K562 (cell line): ENCODE measurements at regions of chr11 and their contacts with region 1.

Region 1: DNA sequence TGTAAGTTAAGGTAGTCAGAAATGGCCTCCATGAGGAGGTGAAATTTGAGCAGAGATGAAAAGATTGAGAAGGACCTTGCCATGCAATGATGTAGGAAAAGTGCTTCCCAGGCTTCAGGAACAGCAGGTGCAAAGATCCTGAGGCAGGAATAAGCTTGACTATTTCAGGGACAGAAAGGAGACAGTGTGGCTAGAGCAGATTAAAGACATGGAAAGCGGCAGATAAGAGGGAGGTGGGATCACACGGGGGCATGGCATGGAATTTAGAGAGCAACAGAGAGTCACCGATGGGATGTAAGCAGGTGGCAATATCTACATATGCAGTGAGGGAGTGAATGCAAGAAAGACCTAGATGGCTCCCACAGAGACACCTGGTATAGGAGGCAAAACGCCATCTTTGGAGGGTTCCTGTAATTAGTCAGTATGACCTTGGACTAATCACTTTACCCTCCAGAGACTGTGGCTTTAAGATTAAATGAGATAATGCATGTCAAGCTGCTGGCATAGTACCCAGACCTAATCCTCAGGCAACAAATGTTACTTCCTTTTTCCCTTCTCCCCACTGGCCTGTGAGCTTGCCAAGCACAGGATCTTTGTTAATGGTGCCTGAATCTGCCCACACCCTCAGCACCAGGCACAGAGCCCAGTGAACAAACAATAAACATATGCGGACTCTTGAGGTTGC is 24.6 kb upstream of the ACER3 start:
- DNase-seq: no peak
- ATAC-seq: no peak
- H3K4me3 ChIP-seq: no peak overlapping the region
- H3K27ac ChIP-seq: no peak overlapping the region
- H3K4me1 ChIP-seq: peaks cover 24 to 28% of the 10 kb centered on the region in 2 experiments; a peak in 3 of 5 replicates
- H3K27me3 ChIP-seq: no peaks in the 10 kb centered on the region
- CTCF ChIP-seq: no peak
- EP300 ChIP-seq: no peak
- POLR2A ChIP-seq: no peak
- RAD21 ChIP-seq: no peak

Region 2: GRCh38 chr11:76807206-76807875 is 28.7 kb before region 1 on chr11:
- CTCF ChIA-PET with region 1: interaction called, 4 read pairs
- POLR2A ChIA-PET with region 1: interaction called, 3 read pairs
- in situ Hi-C with region 1: no loop called
- intact Hi-C with region 1: loop called (anchors 1 kb)
- DNase-seq: peak; percentile 84 to 92 (median 86)
- ATAC-seq: peak; percentile 98
- H3K4me3 ChIP-seq: no peak overlapping the region
- H3K27ac ChIP-seq: no peak overlapping the region
- H3K4me1 ChIP-seq: peaks cover 10 to 20% of the 10 kb centered on the region in 2 experiments; a peak in 4 of 5 replicates
- H3K27me3 ChIP-seq: no peaks in the 10 kb centered on the region
- CTCF ChIP-seq: peak; percentile 85 to 89 (median 89)
- EP300 ChIP-seq: no peak
- POLR2A ChIP-seq: no peak
- RAD21 ChIP-seq: peak; percentile 71 to 86